ENCODE measurements at regions of chr5 and their contacts with region 1.

Region 1: DNA sequence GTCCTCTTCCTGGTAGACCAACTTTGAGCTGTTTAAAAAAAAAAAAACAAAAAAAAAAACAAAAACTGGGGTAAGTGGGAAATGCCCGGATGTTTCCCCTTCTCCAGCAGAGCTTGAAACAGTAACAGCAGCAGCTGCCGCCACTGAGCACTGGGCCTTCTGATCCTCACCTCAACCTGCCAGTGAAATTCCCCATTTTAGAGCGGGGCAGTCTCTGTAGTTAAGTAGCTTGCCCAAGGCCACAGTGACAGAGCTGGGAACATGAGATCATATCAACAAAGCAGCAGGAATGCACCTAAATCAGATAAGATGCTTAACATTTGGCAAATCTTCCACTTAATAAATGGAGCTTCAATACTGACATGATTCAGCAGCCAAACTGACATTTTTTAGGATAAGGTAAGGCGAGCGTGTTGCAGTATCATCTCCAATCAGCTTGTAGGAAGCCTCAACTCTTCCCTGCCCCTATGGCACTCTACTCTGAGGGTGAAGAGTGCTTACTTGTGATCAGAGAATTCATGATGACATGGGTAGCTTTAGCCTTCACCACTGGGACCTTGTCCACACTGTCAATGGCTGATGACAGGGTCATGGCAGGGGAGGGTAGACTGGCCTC is 9.3 kb downstream of the KIAA1191 start:
- DNase-seq: peak in 1 of 2 experiments; percentile 64
- H3K4me3 ChIP-seq: no peak overlapping the region
- H3K27ac ChIP-seq: peak overlapping the region; percentile 11; the same call in 1 of the 2 replicates
- H3K4me1 ChIP-seq: no peaks in the 10 kb centered on the region
- H3K27me3 ChIP-seq: no peaks in the 10 kb centered on the region
- CTCF ChIP-seq: no peak

Region 2: GRCh38 chr5:176334031-176334770 is 18.0 kb before region 1 on chr5:
- CTCF ChIA-PET with region 1: no interaction called
- POLR2A ChIA-PET with region 1: interaction called, 14 read pairs
- intact Hi-C with region 1: no loop called
- DNase-seq: no peak
- H3K4me3 ChIP-seq: no peak overlapping the region
- H3K27ac ChIP-seq: no peak overlapping the region
- H3K4me1 ChIP-seq: no peaks in the 10 kb centered on the region
- H3K27me3 ChIP-seq: no peaks in the 10 kb centered on the region
- CTCF ChIP-seq: no peak

Region 3: GRCh38 chr5:176481711-176482110 is 129.5 kb after region 1 on chr5:
- CTCF ChIA-PET with region 1: no interaction called
- POLR2A ChIA-PET with region 1: no interaction called
- intact Hi-C with region 1: no loop called
- DNase-seq: no peak
- H3K4me3 ChIP-seq: no peak overlapping the region
- H3K27ac ChIP-seq: peak overlapping the region; percentile 25; the same call in 1 of the 2 replicates
- H3K4me1 ChIP-seq: 0 out of 2 replicates have a peak, but pooled peaks cover 1% of the 10 kb centered on the region
- H3K27me3 ChIP-seq: no peaks in the 10 kb centered on the region
- CTCF ChIP-seq: no peak

Region 4: GRCh38 chr5:176609724-176610434 is 257.6 kb after region 1 on chr5 and contains the start of gene GPRIN1:
- CTCF ChIA-PET with region 1: no interaction called
- POLR2A ChIA-PET with region 1: interaction called, 19 read pairs
- intact Hi-C with region 1: no loop called
- DNase-seq: peak in 1 of 2 experiments; percentile 73
- H3K4me3 ChIP-seq: peak within 1 kb of the TSS; percentile 71
- H3K27ac ChIP-seq: no peak within 1 kb of the TSS
- H3K4me1 ChIP-seq: peaks cover 17% of the 10 kb centered on the region; the same call in 1 of the 2 replicates
- H3K27me3 ChIP-seq: no peaks in the 10 kb centered on the region
- CTCF ChIP-seq: peak; percentile 39; the same call in 1 of the 2 replicates
- total RNA-seq, gene GPRIN1: 7.2 and 11.0 TPM in 2 replicates